Activated CD4-positive, alpha-beta memory T cell treated with anti-CD3 and anti-CD28 coated beads, Interleukin-2, amount 10 ng/mL, durations not matched to agents 7 days and 5 days (primary cell): ENCODE measurements at regions of chr6 and their contacts with region 1.

Region 1: GRCh38 chr6:43769526-43770416 is at the start of gene VEGFA:
- DNase-seq: peak; percentile 88
- H3K4me3 Mint-ChIP-seq: peak within 1 kb of the TSS; percentile 90
- H3K27ac Mint-ChIP-seq: peak within 1 kb of the TSS; percentile 75
- H3K4me1 Mint-ChIP-seq: peaks cover 34% of the 10 kb centered on the region
- H3K27me3 Mint-ChIP-seq: peaks cover 3% of the 10 kb centered on the region
- total RNA-seq, gene VEGFA: 48.1 to 49.5 TPM

Region 2: GRCh38 chr6:43687437-43688347 is 82.1 kb before region 1 on chr6 and contains the start of gene MRPS18A:
- CTCF ChIA-PET with region 1: interaction called, 18 read pairs
- POLR2A ChIA-PET with region 1: interaction called, 3 read pairs
- DNase-seq: peak; percentile 88
- H3K4me3 Mint-ChIP-seq: peak within 1 kb of the TSS; percentile 81
- H3K27ac Mint-ChIP-seq: peak within 1 kb of the TSS; percentile 80
- H3K4me1 Mint-ChIP-seq: peaks cover 40% of the 10 kb centered on the region
- H3K27me3 Mint-ChIP-seq: no peaks in the 10 kb centered on the region
- total RNA-seq, gene MRPS18A: 38.5 to 40.5 TPM

Region 3: DNA sequence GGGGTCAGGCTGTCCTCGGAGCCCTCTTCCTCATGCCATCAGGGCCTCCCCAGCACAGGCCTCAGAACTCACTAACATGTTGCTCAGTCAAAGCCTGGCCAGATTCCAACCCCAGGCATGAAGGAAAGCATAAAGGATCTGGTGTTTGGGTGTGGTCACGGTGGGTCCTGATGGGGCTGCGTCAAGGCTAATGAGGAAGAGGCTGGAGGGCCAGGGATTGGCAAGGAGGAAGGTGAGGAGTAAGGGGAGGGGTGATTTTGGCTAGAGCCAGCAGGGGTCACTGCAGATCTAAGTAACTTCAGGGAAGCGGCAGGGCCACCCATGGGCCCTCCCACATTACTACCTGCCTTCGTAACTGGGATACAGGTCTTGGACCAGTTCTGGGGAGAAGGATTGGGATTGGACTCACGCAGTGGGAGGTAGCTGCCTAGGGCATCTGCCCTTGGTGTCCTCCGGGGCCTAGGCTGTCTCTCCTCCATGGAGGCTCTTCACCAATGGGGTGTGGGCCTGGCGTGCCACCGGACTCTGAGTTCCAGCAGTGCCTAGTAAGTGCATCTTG is 46.0 kb before region 1 on chr6:
- CTCF ChIA-PET with region 1: interaction called, 32 read pairs
- POLR2A ChIA-PET with region 1: interaction called, 15 read pairs
- DNase-seq: peak; percentile 78
- H3K4me3 Mint-ChIP-seq: no peak overlapping the region
- H3K27ac Mint-ChIP-seq: no peak overlapping the region
- H3K4me1 Mint-ChIP-seq: peaks cover 27% of the 10 kb centered on the region
- H3K27me3 Mint-ChIP-seq: peaks cover 2% of the 10 kb centered on the region

Region 4: GRCh38 chr6:44028789-44029310 is 259.1 kb after region 1 on chr6:
- CTCF ChIA-PET with region 1: no interaction called
- POLR2A ChIA-PET with region 1: no interaction called
- DNase-seq: no peak
- H3K4me3 Mint-ChIP-seq: no peak overlapping the region
- H3K27ac Mint-ChIP-seq: no peak overlapping the region
- H3K4me1 Mint-ChIP-seq: no peaks in the 10 kb centered on the region
- H3K27me3 Mint-ChIP-seq: peaks cover 21% of the 10 kb centered on the region